ENCODE measurements at regions of chr3 and their contacts with region 1.

Region 1: GRCh38 chr3:16884084-16884747 is 539 bp upstream of the PLCL2 start:
- DNase-seq: peak; percentile 44 to 77 (median 66)
- ATAC-seq: peak; percentile 69
- H3K4me3 ChIP-seq: peak overlapping the region; percentile 46
- H3K4me3 Mint-ChIP-seq: peak overlapping the region; percentile 90 to 99 (median 96)
- H3K27ac ChIP-seq: peak overlapping the region; percentile 78
- H3K27ac Mint-ChIP-seq: peak overlapping the region; percentile 92 to 99 (median 97)
- H3K4me1 ChIP-seq: peaks cover 12 to 14% of the 10 kb centered on the region in 2 donors
- H3K4me1 Mint-ChIP-seq: peaks cover 27 to 40% (median 35%) of the 10 kb centered on the region in 7 donors
- H3K27me3 ChIP-seq: no peaks in the 10 kb centered on the region
- H3K27me3 Mint-ChIP-seq: peaks cover 0 to 7% (median 0%) of the 10 kb centered on the region in 5 donors

Region 2: GRCh38 chr3:16467393-16467792 is 416.8 kb before region 1 on chr3:
- CTCF ChIA-PET with region 1: no interaction called
- POLR2A ChIA-PET with region 1: no interaction called
- intact Hi-C with region 1: loop called in 1 of 2 experiments (anchors 5 kb)
- DNase-seq: peak in 8 of 9 donors; percentile 14 to 77 (median 39)
- ATAC-seq: peak; percentile 80
- H3K4me3 ChIP-seq: no peak overlapping the region
- H3K4me3 Mint-ChIP-seq: peak overlapping the region; percentile 68 to 86 (median 79)
- H3K27ac ChIP-seq: peak overlapping the region; percentile 68
- H3K27ac Mint-ChIP-seq: peak overlapping the region; percentile 49 to 99 (median 95)
- H3K4me1 ChIP-seq: peaks cover 6 to 44% of the 10 kb centered on the region in 2 donors
- H3K4me1 Mint-ChIP-seq: peaks cover 55 to 84% (median 67%) of the 10 kb centered on the region in 7 donors
- H3K27me3 ChIP-seq: no peaks in the 10 kb centered on the region
- H3K27me3 Mint-ChIP-seq: no peaks in the 10 kb centered on the region

Region 3: GRCh38 chr3:16842272-16843270 is 41.6 kb before region 1 on chr3:
- CTCF ChIA-PET with region 1: interaction called, 12 read pairs
- POLR2A ChIA-PET with region 1: interaction called, 87 read pairs
- intact Hi-C with region 1: loop called (anchors 1 kb)
- DNase-seq: peak; percentile 49 to 85 (median 78)
- ATAC-seq: peak; percentile 95
- H3K4me3 ChIP-seq: peak overlapping the region; percentile 61
- H3K4me3 Mint-ChIP-seq: peak overlapping the region; percentile 78 to 93 (median 87)
- H3K27ac ChIP-seq: peak overlapping the region; percentile 76
- H3K27ac Mint-ChIP-seq: peak overlapping the region; percentile 92 to 99 (median 98)
- H3K4me1 ChIP-seq: peaks cover 49 to 51% of the 10 kb centered on the region in 2 donors
- H3K4me1 Mint-ChIP-seq: peaks cover 34 to 96% (median 90%) of the 10 kb centered on the region in 7 donors
- H3K27me3 ChIP-seq: no peaks in the 10 kb centered on the region
- H3K27me3 Mint-ChIP-seq: peaks cover 0 to 6% (median 0%) of the 10 kb centered on the region in 5 donors

Region 4: DNA sequence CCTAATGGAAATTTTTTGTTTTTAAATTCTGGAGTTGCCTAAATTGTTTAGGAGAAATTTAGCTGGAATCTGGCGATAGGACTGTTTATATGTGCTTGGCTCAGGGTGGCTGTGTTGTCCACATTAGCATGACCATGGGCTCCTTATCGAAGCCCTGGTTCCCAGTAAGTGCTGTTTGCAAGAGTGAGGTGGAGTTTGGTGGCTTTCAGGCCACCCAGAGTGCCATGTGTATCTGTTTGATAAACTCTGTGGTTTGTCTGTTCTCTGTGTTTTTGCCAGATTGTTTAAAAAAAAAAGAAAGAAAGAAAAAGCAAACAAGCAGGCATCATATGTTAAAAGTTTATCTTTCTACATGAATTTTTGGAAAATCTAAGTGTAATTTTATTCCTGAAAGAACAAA is 52.0 kb after region 1 on chr3:
- CTCF ChIA-PET with region 1: no interaction called
- POLR2A ChIA-PET with region 1: interaction called, 6 read pairs
- intact Hi-C with region 1: loop called in 1 of 2 experiments (anchors 1 kb)
- DNase-seq: peak in 7 of 9 donors; percentile 29 to 65 (median 45)
- ATAC-seq: peak; percentile 74
- H3K4me3 ChIP-seq: peak overlapping the region; percentile 5
- H3K4me3 Mint-ChIP-seq: peak overlapping the region; percentile 27 to 77 (median 72)
- H3K27ac ChIP-seq: no peak overlapping the region
- H3K27ac Mint-ChIP-seq: peak overlapping the region in 7 of 9 donors; percentile 29 to 87 (median 61)
- H3K4me1 ChIP-seq: peaks cover 35 to 68% of the 10 kb centered on the region in 2 donors
- H3K4me1 Mint-ChIP-seq: peaks cover 61 to 100% (median 98%) of the 10 kb centered on the region in 7 donors
- H3K27me3 ChIP-seq: no peaks in the 10 kb centered on the region
- H3K27me3 Mint-ChIP-seq: no peaks in the 10 kb centered on the region

Region 5: GRCh38 chr3:17088602-17089313 is 204.5 kb after region 1 on chr3:
- CTCF ChIA-PET with region 1: interaction called, 3 read pairs
- POLR2A ChIA-PET with region 1: no interaction called
- intact Hi-C with region 1: loop called in 1 of 2 experiments (anchors 5 kb)
- DNase-seq: peak in 1 of 9 donors; percentile 29
- ATAC-seq: peak; percentile 81
- H3K4me3 ChIP-seq: no peak overlapping the region
- H3K4me3 Mint-ChIP-seq: peak overlapping the region in 4 of 10 donors; percentile 8 to 45 (median 30)
- H3K27ac ChIP-seq: no peak overlapping the region
- H3K27ac Mint-ChIP-seq: peak overlapping the region; percentile 52 to 90 (median 78)
- H3K4me1 ChIP-seq: peaks cover 6 to 32% of the 10 kb centered on the region in 2 donors
- H3K4me1 Mint-ChIP-seq: peaks cover 16 to 47% (median 38%) of the 10 kb centered on the region in 7 donors
- H3K27me3 ChIP-seq: no peaks in the 10 kb centered on the region
- H3K27me3 Mint-ChIP-seq: no peaks in the 10 kb centered on the region

Region 6: GRCh38 chr3:17195192-17195611 is 311.0 kb after region 1 on chr3:
- CTCF ChIA-PET with region 1: no interaction called
- POLR2A ChIA-PET with region 1: no interaction called
- intact Hi-C with region 1: no loop called
- DNase-seq: no peak
- ATAC-seq: peak; percentile 31
- H3K4me3 ChIP-seq: no peak overlapping the region
- H3K4me3 Mint-ChIP-seq: no peak overlapping the region
- H3K27ac ChIP-seq: no peak overlapping the region
- H3K27ac Mint-ChIP-seq: peak overlapping the region in 1 of 9 donors; percentile 18
- H3K4me1 ChIP-seq: peaks cover 0 to 8% of the 10 kb centered on the region in 2 donors
- H3K4me1 Mint-ChIP-seq: peaks cover 0 to 19% (median 4%) of the 10 kb centered on the region in 7 donors
- H3K27me3 ChIP-seq: no peaks in the 10 kb centered on the region
- H3K27me3 Mint-ChIP-seq: no peaks in the 10 kb centered on the region

Region 7: GRCh38 chr3:18424729-18425640 is 1540.8 kb after region 1 on chr3 and contains the start of gene SATB1:
- CTCF ChIA-PET with region 1: no interaction called
- POLR2A ChIA-PET with region 1: no interaction called
- intact Hi-C with region 1: loop called (anchors 10 kb)
- DNase-seq: peak; percentile 55 to 72 (median 67)
- ATAC-seq: peak; percentile 62
- H3K4me3 ChIP-seq: peak within 1 kb of the TSS; percentile 72
- H3K4me3 Mint-ChIP-seq: peak within 1 kb of the TSS; percentile 91 to 100 (median 98)
- H3K27ac ChIP-seq: peak within 1 kb of the TSS; percentile 97
- H3K27ac Mint-ChIP-seq: peak within 1 kb of the TSS; percentile 87 to 99 (median 98)
- H3K4me1 ChIP-seq: peaks cover 8 to 21% of the 10 kb centered on the region in 2 donors
- H3K4me1 Mint-ChIP-seq: peaks cover 41 to 72% (median 62%) of the 10 kb centered on the region in 7 donors
- H3K27me3 ChIP-seq: no peaks in the 10 kb centered on the region
- H3K27me3 Mint-ChIP-seq: peaks cover 0 to 2% (median 0%) of the 10 kb centered on the region in 5 donors
- total RNA-seq, gene SATB1: 258 to 482 (median 451) TPM